PC-9 (cell line): ENCODE measurements at regions of chr2 and their contacts with region 1.

Region 1: GRCh38 chr2:29817801-29818680 is 103.3 kb downstream of the ALK start:
- DNase-seq: no peak
- H3K4me3 ChIP-seq: no peak overlapping the region
- H3K27ac ChIP-seq: no peak overlapping the region
- H3K4me1 ChIP-seq: no peaks in the 10 kb centered on the region
- H3K27me3 ChIP-seq: peaks cover 74% of the 10 kb centered on the region
- CTCF ChIP-seq: no peak

Region 2: DNA sequence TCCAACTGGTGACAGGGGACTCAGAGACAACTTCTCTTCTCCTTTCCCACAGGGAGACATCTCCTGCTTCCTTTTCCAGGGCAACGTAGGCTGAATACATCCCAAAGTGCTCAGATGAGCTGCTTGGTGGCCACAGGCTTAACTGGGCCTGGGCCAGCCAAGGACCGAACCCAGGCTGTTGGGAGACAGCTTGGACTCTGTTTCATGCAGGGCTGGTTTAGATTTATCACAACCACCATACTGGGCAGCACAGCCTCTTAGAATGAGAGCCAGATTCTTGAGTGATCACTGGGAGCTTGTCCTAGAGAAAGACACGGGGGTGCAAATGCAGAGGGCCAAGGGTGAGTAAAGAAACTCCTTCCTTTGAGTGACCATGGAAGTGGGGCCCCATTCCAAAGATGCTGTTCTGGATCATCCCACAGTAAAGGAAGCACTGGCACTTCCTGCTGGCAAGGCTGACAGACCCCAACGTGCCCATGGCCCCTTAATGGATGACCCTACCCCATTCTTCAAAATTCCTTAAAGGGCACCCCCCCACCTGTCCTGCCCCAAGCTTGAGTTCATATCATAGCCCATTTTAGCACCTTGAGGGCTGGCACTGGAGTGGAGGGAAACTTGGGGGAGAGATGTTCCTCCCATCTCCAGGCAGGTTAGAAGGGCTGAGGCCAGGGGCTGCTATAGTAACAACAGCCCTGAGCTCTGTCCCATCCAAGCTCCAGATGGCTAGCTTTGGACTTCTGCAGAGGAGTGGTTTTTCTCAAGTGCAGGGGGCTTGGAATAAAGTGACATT is 905.1 kb after region 1 on chr2:
- CTCF ChIA-PET with region 1: no interaction called
- POLR2A ChIA-PET with region 1: no interaction called
- intact Hi-C with region 1: no loop called
- DNase-seq: no peak
- H3K4me3 ChIP-seq: no peak overlapping the region
- H3K27ac ChIP-seq: no peak overlapping the region
- H3K4me1 ChIP-seq: no peaks in the 10 kb centered on the region
- H3K27me3 ChIP-seq: no peaks in the 10 kb centered on the region
- CTCF ChIP-seq: no peak

Region 3: DNA sequence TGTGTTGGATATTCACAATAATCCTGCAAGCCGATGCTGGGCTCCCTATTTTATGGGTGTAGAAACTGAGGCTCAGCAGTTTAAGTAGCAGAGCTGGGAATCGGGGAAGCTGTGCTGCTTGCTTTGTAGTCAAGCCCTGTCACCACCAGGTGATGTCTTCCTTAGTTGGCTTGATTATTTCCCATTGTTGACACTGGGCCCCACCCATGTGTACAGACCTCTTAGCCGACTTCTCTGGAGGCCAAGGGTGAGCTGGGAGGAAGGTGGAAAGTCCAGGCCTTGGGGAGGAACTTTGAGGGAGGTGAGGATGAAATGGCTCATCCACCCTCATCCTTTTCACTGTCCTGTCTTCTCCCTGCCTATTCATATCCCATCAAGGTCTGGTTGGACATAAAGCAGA is 929.2 kb after region 1 on chr2:
- CTCF ChIA-PET with region 1: no interaction called
- POLR2A ChIA-PET with region 1: interaction called, 10 read pairs
- intact Hi-C with region 1: no loop called
- DNase-seq: peak in 1 of 2 experiments; percentile 71
- H3K4me3 ChIP-seq: no peak overlapping the region
- H3K27ac ChIP-seq: no peak overlapping the region
- H3K4me1 ChIP-seq: peaks cover 21% of the 10 kb centered on the region
- H3K27me3 ChIP-seq: no peaks in the 10 kb centered on the region
- CTCF ChIP-seq: no peak; the same call in 1 of the 2 replicates